ENCODE measurements at regions of chr1 and their contacts with region 1.

Region 1: DNA sequence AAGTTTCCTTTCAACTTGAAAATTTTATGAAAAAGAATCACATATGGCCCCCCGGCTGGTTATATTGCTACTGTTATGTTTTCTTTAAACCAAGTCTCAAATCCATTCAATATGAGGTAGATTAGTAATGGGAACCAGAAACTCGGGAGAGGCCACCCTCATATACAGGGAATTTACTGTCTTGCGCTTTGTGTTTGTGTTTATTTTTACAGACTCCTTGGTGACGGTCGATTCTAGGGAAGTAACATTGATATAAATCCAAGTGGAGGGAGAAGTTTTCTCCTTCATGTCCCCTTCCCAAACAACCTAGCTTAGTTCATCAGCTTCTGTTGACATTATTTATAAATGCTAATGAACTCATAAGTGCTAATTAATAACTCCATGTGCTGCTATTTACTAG is 163.5 kb upstream of the LMO4 start:
- DNase-seq: no peak
- H3K4me3 ChIP-seq: no peak overlapping the region
- H3K27ac ChIP-seq: no peak overlapping the region
- H3K4me1 ChIP-seq: no peaks in the 10 kb centered on the region
- H3K27me3 ChIP-seq: no peaks in the 10 kb centered on the region
- CTCF ChIP-seq: no peak
- POLR2A ChIP-seq: no peak

Region 2: DNA sequence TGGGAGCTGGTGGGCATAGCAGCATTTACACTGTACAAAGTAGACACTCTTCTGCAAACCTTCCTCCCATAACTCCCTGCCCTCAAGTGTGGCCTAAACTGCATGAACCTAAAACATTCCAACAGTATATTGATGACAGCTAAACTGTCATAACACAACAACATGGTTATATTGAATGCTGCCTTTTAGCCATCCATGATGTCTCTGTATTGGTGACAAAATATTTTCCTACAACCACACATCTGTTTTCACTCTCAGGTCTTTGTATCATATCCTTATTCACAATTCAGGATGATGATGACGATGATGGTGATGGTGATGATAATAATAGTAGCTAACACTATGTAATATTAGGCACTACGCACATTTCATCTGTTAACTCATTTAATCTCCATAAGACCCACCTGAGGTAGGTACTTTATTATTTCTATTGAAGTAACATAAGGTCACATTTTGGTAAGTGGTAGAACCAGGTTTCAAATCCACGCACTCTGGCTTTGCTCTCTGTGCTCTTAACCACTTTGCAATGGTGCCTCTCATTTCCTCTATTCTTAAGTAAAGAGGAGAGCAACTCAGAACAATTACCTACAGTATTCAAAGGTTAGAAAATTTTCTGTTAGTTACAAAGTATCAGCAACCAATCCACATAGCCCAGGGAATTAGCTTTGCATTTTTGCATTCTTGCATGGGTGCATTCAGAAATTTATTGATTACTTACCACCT is 21.6 kb before region 1 on chr1:
- intact Hi-C with region 1: loop called (anchors 2 kb)
- DNase-seq: no peak
- H3K4me3 ChIP-seq: no peak overlapping the region
- H3K27ac ChIP-seq: no peak overlapping the region
- H3K4me1 ChIP-seq: no peaks in the 10 kb centered on the region
- H3K27me3 ChIP-seq: no peaks in the 10 kb centered on the region
- CTCF ChIP-seq: no peak
- POLR2A ChIP-seq: no peak